ENCODE measurements at regions of chr22 and their contacts with region 1.

Region 1: DNA sequence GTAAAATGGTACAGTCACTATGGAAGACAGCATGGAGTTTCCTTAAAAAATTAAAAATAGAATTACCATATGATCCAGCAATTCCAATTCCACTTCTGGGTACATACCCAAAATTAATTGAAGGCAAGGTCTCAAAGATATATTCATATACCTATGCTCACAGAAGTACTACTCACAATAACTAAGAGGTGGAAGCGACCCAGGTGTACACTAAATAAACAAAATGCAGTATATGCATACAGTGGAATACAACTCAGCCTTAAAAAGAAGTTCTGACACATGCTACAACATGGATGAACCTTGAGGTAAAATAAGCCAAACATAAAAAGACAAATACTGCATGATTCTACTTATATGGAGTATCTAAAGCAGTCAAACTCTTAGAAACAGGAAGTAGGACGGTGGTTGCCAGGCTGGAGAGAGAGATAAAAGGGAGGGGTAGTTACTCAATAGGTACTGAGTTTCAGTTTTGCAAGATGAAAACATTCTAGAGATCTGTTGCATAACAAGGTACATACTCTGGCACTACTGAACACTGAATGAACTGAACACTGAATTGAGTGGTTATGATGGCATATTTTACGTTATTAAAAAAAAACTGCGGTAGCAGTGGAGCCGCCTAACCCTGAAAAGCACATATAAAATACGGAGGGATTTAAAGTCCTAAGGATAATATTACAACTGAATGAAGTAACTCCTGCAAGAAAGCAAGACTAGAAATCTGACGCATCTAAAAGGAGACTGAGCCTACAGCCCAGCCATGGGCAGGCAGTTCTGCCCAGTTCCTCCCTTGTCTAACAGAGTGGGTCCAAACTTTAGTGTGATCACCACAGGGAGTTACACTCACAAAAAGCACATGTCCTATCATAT is 12.8 kb downstream of the DGCR2 start:
- DNase-seq: peak; percentile 15
- ATAC-seq: peak; percentile 90

Region 2: GRCh38 chr22:19043121-19044055 is 66.0 kb before region 1 on chr22:
- intact Hi-C with region 1: loop called (anchors 10 kb)
- DNase-seq: peak; percentile 2
- ATAC-seq: no peak